ENCODE measurements at regions of chr7 and their contacts with region 1.

Region 1: GRCh38 chr7:73451780-73452398 is 18.3 kb downstream of the FZD9 start:
- DNase-seq: no peak
- H3K4me3 Mint-ChIP-seq: no peak overlapping the region
- H3K27ac Mint-ChIP-seq: no peak overlapping the region
- H3K4me1 Mint-ChIP-seq: peaks cover 12% of the 10 kb centered on the region
- H3K27me3 Mint-ChIP-seq: no peaks in the 10 kb centered on the region

Region 2: GRCh38 chr7:73328696-73329095 is 123.2 kb before region 1 on chr7:
- CTCF ChIA-PET with region 1: interaction called, 18 read pairs
- POLR2A ChIA-PET with region 1: no interaction called
- DNase-seq: no peak
- H3K4me3 Mint-ChIP-seq: no peak overlapping the region
- H3K27ac Mint-ChIP-seq: no peak overlapping the region
- H3K4me1 Mint-ChIP-seq: peaks cover 13% of the 10 kb centered on the region
- H3K27me3 Mint-ChIP-seq: peaks cover 5% of the 10 kb centered on the region

Region 3: DNA sequence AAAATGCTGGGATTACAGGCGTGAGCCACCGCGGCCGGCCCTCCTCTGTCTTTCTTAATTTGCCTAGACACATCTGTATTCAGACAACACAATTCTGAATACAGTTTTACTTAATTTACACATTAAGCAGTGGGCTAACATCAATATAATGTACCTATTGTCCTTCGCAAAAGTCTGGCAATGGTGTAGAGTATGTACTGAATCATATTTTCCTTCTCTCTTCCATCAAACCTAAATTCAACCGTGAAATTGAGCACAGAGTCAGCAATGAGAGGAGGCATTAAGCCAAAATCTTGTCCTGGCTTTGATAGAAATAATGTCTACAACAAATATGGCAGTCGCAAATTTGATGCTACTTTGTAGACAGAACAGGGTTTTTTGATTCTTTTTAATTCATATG is 12.1 kb after region 1 on chr7:
- CTCF ChIA-PET with region 1: interaction called, 13 read pairs
- POLR2A ChIA-PET with region 1: no interaction called
- DNase-seq: no peak
- H3K4me3 Mint-ChIP-seq: no peak overlapping the region
- H3K27ac Mint-ChIP-seq: no peak overlapping the region
- H3K4me1 Mint-ChIP-seq: peaks cover 4% of the 10 kb centered on the region
- H3K27me3 Mint-ChIP-seq: no peaks in the 10 kb centered on the region

Region 4: DNA sequence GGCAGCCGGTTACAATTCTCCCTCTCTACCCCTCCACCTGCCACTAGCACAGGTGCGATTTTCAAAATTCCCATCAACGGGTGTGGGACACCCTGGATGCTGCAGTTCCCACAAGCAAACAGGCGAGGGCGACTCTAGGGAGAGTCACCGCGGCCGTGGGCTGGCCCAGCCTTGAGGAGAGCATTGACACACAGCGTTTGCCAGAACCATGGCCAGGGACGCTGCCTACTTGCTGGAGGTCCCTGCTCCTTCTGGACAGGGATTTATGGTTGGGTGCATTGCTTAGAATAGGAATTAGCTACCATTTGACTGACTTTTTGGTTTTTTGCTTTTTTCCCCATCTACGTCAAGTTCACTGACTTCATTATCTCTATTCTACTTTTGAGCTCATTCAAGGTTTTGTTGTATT is 359.9 kb after region 1 on chr7:
- CTCF ChIA-PET with region 1: no interaction called
- POLR2A ChIA-PET with region 1: no interaction called
- DNase-seq: peak; percentile 65
- H3K4me3 Mint-ChIP-seq: no peak overlapping the region
- H3K27ac Mint-ChIP-seq: no peak overlapping the region
- H3K4me1 Mint-ChIP-seq: no peaks in the 10 kb centered on the region
- H3K27me3 Mint-ChIP-seq: peaks cover 4% of the 10 kb centered on the region

Measured in activated CD4-positive, alpha-beta memory T cell treated with anti-CD3 and anti-CD28 coated beads, Interleukin-2, amount 10 ng/mL, durations not matched to agents 7 days and 5 days (primary cell).